ENCODE measurements at regions of chr5 and their contacts with region 1.

Region 1: GRCh38 chr5:139439013-139439903 is at the start of gene DNAJC18:
- DNase-seq: peak; percentile 71 to 90 (median 85)
- ATAC-seq: peak; percentile 96
- H3K4me3 ChIP-seq: peak within 1 kb of the TSS; percentile 86
- H3K4me3 Mint-ChIP-seq: peak within 1 kb of the TSS; percentile 84 to 99 (median 98)
- H3K27ac ChIP-seq: peak within 1 kb of the TSS; percentile 100
- H3K27ac Mint-ChIP-seq: peak within 1 kb of the TSS; percentile 96 to 100 (median 99)
- H3K4me1 ChIP-seq: peaks cover 15 to 26% of the 10 kb centered on the region in 2 donors
- H3K4me1 Mint-ChIP-seq: peaks cover 23 to 64% (median 45%) of the 10 kb centered on the region in 7 donors
- H3K27me3 ChIP-seq: no peaks in the 10 kb centered on the region
- H3K27me3 Mint-ChIP-seq: no peaks in the 10 kb centered on the region
- total RNA-seq, gene DNAJC18: 2.2 to 9.7 (median 4.9) TPM

Region 2: DNA sequence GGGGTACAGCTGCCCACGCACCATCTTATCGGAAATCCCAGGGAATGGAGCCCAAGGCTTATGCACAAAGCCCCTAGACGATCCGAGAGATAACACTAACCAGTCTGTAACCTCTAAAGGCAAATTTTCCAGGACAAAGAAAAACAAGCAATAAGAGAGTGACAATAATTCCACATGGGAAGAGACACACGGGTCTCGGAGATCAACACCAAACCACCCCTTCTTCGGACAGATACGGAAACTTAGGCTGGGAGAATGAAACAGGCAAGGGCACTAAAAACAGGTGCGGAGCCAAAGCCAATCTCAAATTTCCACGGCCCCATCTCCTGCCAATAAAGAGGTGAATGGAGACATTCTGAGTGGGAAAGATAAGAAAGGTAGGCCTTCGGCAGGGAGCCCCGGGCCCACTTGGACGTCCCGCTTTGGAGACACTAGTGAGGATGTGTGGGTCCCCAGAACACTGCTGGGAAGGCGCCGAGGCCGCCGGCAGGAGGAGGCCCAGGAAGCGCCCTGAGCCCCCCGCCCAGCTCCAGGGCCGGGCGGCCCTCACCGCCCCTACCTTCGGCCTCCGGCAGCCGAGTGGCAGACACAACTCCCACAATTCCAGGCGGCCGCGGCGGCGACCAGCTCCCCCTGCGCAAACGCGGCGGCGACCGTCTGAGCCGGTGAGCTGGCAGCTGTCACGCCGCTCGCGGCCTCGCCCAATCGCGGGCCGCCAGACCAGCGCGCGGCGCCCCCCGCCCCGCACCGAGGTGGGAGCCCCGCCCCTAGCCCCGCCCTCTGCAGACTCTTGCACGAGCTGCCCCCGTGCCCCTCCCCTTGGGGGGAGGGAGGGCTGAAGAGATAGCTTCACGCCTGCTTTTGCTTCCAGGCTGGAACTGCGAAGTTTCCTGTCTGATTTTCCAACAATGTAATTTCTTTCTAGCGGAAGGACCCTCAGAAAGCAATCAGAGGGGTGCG is 241.3 kb before region 1 on chr5 and contains the start of gene SIL1:
- CTCF ChIA-PET with region 1: no interaction called
- POLR2A ChIA-PET with region 1: no interaction called
- intact Hi-C with region 1: loop called in 1 of 2 experiments (anchors 1 kb)
- DNase-seq: peak; percentile 88 to 94 (median 91)
- ATAC-seq: peak; percentile 99
- H3K4me3 ChIP-seq: peak within 1 kb of the TSS; percentile 97
- H3K4me3 Mint-ChIP-seq: peak within 1 kb of the TSS; percentile 83 to 96 (median 90)
- H3K27ac ChIP-seq: peak within 1 kb of the TSS; percentile 89
- H3K27ac Mint-ChIP-seq: peak within 1 kb of the TSS; percentile 86 to 96 (median 91)
- H3K4me1 ChIP-seq: peaks cover 8% of the 10 kb centered on the region in 2 donors
- H3K4me1 Mint-ChIP-seq: peaks cover 17 to 38% (median 26%) of the 10 kb centered on the region in 7 donors
- H3K27me3 ChIP-seq: no peaks in the 10 kb centered on the region
- H3K27me3 Mint-ChIP-seq: no peaks in the 10 kb centered on the region
- total RNA-seq, gene SIL1: 11.9 to 27.1 (median 22.8) TPM

Region 3: GRCh38 chr5:139368613-139369012 is 70.6 kb before region 1 on chr5:
- CTCF ChIA-PET with region 1: no interaction called
- POLR2A ChIA-PET with region 1: no interaction called
- intact Hi-C with region 1: no loop called
- DNase-seq: no peak
- ATAC-seq: no peak
- H3K4me3 ChIP-seq: no peak overlapping the region
- H3K4me3 Mint-ChIP-seq: no peak overlapping the region
- H3K27ac ChIP-seq: no peak overlapping the region
- H3K27ac Mint-ChIP-seq: peak overlapping the region in 3 of 9 donors; percentile 5 to 63 (median 14)
- H3K4me1 ChIP-seq: no peaks in the 10 kb centered on the region
- H3K4me1 Mint-ChIP-seq: peaks cover 0 to 15% (median 0%) of the 10 kb centered on the region in 7 donors
- H3K27me3 ChIP-seq: no peaks in the 10 kb centered on the region
- H3K27me3 Mint-ChIP-seq: no peaks in the 10 kb centered on the region

Region 4: DNA sequence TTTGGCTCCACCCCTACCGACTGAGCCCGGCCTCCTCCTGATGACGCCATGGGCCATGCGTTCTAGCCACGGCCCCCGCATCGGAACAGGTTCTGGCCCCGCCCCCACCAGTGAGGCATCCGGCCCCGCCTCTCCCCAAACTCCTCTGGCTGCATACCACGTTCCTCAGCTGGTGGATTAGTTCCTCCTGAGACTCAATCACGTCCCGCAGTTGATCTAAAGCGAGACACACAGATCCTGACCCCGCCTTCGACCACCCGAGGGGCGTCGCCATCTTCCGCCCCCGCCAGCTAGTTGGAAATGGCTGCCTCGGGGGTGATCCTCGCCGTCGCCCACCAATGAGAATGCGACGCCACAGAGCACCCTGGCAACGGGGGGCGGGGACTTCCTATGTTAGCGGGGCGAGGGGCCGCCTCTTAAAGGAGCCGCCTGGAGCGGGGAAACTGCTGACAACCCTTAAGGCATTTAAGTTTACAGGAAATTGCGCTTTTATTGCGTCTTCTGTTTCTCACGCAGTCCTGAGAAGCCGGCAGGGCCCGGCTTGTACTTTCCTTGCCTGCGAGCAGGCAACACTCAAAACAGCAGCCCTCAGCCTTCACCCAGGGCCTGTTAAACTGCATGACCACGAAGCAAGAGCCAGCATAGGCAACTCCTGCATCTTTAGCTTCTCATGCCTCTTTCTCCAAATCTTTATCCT is 35.3 kb before region 1 on chr5 and contains the start of gene SPATA24:
- CTCF ChIA-PET with region 1: interaction called, 3 read pairs
- POLR2A ChIA-PET with region 1: interaction called, 4 read pairs
- intact Hi-C with region 1: loop called (anchors 1 kb)
- DNase-seq: peak; percentile 90 to 99 (median 98)
- ATAC-seq: peak; percentile 94
- H3K4me3 ChIP-seq: peak within 1 kb of the TSS; percentile 56
- H3K4me3 Mint-ChIP-seq: peak within 1 kb of the TSS; percentile 88 to 98 (median 94)
- H3K27ac ChIP-seq: peak within 1 kb of the TSS; percentile 88
- H3K27ac Mint-ChIP-seq: peak within 1 kb of the TSS; percentile 96 to 100 (median 99)
- H3K4me1 ChIP-seq: peaks cover 16 to 18% of the 10 kb centered on the region in 2 donors
- H3K4me1 Mint-ChIP-seq: peaks cover 26 to 42% (median 36%) of the 10 kb centered on the region in 7 donors
- H3K27me3 ChIP-seq: no peaks in the 10 kb centered on the region
- H3K27me3 Mint-ChIP-seq: no peaks in the 10 kb centered on the region
- total RNA-seq, gene SPATA24: 4.4 to 7.6 (median 5.8) TPM

Region 5: DNA sequence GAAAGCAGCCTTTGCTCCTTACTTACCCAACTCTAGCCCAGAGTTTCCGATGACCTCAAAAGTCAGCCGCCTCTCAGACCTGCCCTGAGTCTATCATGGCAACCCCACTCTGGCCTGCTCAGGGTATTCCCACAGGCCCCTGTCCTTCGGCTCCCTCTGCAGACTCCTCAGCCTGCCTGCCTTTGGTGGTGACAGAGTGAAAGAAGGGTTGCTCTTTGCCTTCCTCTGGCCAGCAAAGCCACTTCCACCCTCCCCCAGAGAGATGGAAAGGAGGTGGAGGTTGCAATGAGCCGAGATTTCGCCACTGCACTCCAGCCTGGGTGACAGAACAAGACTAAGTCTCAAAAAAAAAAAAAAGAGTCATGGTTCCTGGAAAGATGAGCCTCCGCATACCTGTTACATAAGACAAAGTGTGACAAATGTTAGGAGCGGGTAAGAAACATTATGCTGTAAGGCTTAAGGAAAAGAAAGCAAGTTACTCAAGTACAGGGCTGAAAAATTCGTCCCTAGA is 29.2 kb after region 1 on chr5:
- CTCF ChIA-PET with region 1: interaction called, 7 read pairs
- POLR2A ChIA-PET with region 1: interaction called, 15 read pairs
- intact Hi-C with region 1: loop called in 1 of 2 experiments (anchors 1 kb)
- DNase-seq: no peak
- ATAC-seq: peak; percentile 46
- H3K4me3 ChIP-seq: no peak overlapping the region
- H3K4me3 Mint-ChIP-seq: peak overlapping the region in 9 of 10 donors; percentile 38 to 84 (median 55)
- H3K27ac ChIP-seq: no peak overlapping the region
- H3K27ac Mint-ChIP-seq: peak overlapping the region in 8 of 9 donors; percentile 51 to 98 (median 81)
- H3K4me1 ChIP-seq: peaks cover 17 to 50% of the 10 kb centered on the region in 2 donors
- H3K4me1 Mint-ChIP-seq: peaks cover 44 to 54% (median 53%) of the 10 kb centered on the region in 7 donors
- H3K27me3 ChIP-seq: no peaks in the 10 kb centered on the region
- H3K27me3 Mint-ChIP-seq: no peaks in the 10 kb centered on the region

Region 6: GRCh38 chr5:139482050-139482889 is 43.0 kb after region 1 on chr5 and contains the start of gene STING1:
- CTCF ChIA-PET with region 1: interaction called, 9 read pairs
- POLR2A ChIA-PET with region 1: interaction called, 54 read pairs
- intact Hi-C with region 1: loop called (anchors 1 kb)
- DNase-seq: peak; percentile 29 to 83 (median 71)
- ATAC-seq: peak; percentile 86
- H3K4me3 ChIP-seq: peak within 1 kb of the TSS; percentile 87
- H3K4me3 Mint-ChIP-seq: peak within 1 kb of the TSS; percentile 86 to 99 (median 94)
- H3K27ac ChIP-seq: peak within 1 kb of the TSS; percentile 80
- H3K27ac Mint-ChIP-seq: peak within 1 kb of the TSS; percentile 94 to 99 (median 96)
- H3K4me1 ChIP-seq: peaks cover 21 to 29% of the 10 kb centered on the region in 2 donors
- H3K4me1 Mint-ChIP-seq: peaks cover 26 to 45% (median 39%) of the 10 kb centered on the region in 7 donors
- H3K27me3 ChIP-seq: no peaks in the 10 kb centered on the region
- H3K27me3 Mint-ChIP-seq: no peaks in the 10 kb centered on the region
- total RNA-seq, gene STING1: 124 to 213 (median 130) TPM